ENCODE measurements at regions of chr3 and their contacts with region 1.

Region 1: DNA sequence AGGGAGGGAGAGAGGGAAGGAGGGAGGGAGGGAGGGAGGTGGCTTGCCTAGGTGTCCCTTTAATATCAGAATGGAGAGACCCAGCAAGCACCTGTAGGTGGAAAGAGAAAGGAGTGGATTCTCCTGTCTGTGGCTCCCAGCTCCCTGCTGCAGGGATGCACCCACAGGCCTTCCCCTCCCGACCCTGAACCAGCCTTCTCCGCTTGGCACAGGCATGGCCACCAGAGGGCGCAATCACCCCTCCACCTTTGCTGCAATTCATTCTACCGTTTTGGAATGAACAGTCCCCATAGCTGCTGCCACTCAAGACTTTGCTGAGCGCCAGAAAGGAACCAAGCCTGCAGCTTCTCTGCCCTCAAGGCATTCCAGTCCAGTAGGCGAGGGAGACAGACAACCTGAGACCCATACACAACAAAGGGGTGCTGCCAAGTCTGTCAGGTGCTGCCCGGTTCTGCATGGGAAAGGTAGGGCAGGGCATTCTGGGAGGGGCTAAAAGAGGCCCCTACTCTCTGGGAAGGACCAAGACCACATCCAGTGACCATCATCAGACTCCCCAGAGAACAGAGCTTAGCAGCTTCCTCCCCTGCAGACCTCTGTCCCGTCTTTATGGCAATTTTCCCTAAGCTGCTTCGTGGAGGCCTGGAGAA is 4.9 kb downstream of the TLR9 start:
- DNase-seq: peak; percentile 54
- ATAC-seq: peak; percentile 72
- H3K4me3 ChIP-seq: no peak overlapping the region
- H3K27ac ChIP-seq: no peak overlapping the region
- H3K4me1 ChIP-seq: peaks cover 21 to 42% of the 10 kb centered on the region in 2 experiments
- H3K27me3 ChIP-seq: no peaks in the 10 kb centered on the region
- CTCF ChIP-seq: peak in 2 of 3 experiments; percentile 94 to 95; a peak in 4 of 6 replicates
- POLR2A ChIP-seq: no peak
- RAD21 ChIP-seq: no peak

Region 2: DNA sequence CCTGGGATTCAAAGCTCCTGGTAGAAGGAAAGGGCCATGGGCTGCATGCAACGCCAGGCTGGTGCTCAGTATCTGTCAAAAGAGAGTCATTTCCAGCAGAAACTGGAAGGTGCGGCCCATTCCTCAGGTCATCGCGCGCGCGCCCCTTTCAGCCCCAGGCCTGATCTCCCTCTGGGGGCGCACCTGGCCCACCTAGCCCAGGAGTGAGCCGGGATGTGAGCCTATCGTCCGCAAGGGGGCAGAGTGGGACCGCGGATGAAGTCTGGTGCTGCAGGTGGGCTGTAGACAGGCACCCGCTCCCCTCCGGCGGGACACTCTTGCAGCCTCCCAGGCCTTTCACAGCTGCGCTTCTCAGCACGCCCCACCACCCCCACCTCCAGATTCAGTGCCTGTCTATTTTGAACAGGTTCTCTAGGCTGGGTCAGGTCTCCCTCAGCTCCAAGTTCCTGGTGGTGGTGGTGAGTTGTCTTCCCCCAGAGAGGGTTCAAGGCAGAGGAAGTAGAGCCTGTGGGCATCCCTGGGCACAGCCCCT is 219.0 kb before region 1 on chr3:
- CTCF ChIA-PET with region 1: interaction called, 7 read pairs
- POLR2A ChIA-PET with region 1: no interaction called
- RAD21 ChIA-PET with region 1: no interaction called
- intact Hi-C with region 1: loop called (anchors 2 kb)
- DNase-seq: peak; percentile 59
- ATAC-seq: peak; percentile 96
- H3K4me3 ChIP-seq: no peak overlapping the region
- H3K27ac ChIP-seq: no peak overlapping the region; the same call in 1 of the 2 replicates
- H3K4me1 ChIP-seq: peaks cover 11 to 35% of the 10 kb centered on the region in 2 experiments
- H3K27me3 ChIP-seq: no peaks in the 10 kb centered on the region
- CTCF ChIP-seq: peak in 2 of 3 experiments; percentile 95 to 98; a peak in 4 of 6 replicates
- POLR2A ChIP-seq: no peak
- RAD21 ChIP-seq: no peak

Region 3: DNA sequence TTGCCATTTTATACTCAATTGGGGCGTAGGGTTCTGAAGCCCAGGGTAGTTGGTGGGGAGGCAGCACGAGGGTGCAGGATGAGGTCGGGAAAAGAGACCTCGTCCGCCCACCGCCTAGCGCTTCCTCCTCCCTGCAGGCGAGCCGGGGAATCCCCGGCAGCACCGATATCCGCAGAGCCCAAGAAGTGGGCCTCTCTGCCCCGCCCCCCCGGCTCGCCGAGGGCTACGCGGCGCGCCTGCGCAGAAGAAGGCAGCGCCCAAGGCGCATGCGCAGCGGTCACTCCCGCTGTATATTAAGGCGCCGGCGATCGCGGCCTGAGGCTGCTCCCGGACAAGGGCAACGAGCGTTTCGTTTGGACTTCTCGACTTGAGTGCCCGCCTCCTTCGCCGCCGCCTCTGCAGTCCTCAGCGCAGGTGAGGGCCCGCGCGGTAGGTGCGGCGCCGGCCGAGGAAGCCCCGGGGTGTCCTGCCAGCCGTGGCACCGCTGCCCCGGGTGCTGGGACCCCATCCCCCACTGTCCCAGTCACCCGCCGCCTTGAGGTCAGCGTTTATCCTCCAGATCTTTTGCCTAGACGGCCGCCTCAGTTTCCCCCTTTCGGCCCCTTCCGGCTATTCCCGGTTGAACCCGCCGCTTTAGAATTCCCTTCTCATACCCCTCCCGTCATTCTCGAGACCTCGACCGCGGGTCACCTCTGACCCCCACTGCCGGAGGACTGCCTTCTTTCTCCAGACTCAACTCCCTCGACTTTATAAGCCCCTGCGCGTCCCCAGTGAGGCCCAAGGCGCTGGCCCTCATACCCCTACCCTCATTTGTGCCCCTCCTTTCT is 22.4 kb before region 1 on chr3 and contains the start of gene ALAS1:
- CTCF ChIA-PET with region 1: interaction called, 10 read pairs
- POLR2A ChIA-PET with region 1: interaction called, 4 read pairs
- RAD21 ChIA-PET with region 1: no interaction called
- intact Hi-C with region 1: no loop called
- DNase-seq: peak; percentile 65
- ATAC-seq: peak; percentile 90
- H3K4me3 ChIP-seq: peak within 1 kb of the TSS; percentile 79 to 89
- H3K27ac ChIP-seq: peak within 1 kb of the TSS; percentile 87
- H3K4me1 ChIP-seq: peaks cover 9 to 28% of the 10 kb centered on the region in 2 experiments
- H3K27me3 ChIP-seq: no peaks in the 10 kb centered on the region
- CTCF ChIP-seq: no peak
- POLR2A ChIP-seq: peak; percentile 91
- RAD21 ChIP-seq: no peak
- total RNA-seq, gene ALAS1: 74.0 TPM

Region 4: DNA sequence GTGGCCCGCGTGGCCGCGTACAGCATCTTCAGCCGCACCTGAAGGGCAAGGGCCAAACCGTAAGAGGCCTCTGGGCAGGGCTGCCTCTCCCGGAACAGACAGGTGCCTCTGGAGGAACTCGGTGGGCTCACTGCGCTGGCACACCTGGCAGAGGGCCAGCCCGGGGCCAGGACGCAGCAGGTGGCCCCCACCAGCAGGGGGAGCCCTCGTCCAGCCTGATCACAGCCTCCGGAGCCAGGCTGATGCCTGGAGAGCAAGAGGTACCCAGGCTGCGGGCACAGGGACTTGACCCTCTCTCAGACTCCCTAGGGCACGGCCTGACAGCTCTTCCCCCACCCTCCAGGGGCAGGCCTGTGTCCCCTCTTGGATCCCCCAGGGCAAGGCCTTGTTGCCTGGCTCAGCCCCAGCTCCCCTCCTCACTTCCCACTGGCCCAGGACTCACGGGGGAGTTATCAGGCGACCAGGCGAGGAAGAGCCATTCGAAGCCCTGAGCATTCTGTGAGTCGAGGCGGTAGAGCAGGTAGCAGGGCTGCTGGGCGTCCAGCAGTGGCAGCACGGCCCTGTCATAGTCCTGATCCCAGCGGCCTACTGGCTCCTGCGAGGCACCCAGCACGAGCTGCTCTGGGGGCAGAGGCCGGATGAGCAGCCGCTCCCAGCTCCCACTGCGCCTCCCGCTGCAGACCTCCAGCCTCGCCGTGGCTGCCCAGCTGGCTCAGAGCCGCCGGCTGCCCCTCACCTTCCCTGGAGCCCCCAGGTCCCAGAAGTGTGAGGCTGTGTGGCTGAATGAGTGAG is 11.2 kb after region 1 on chr3:
- CTCF ChIA-PET with region 1: interaction called, 18 read pairs
- POLR2A ChIA-PET with region 1: interaction called, 4 read pairs
- RAD21 ChIA-PET with region 1: interaction called in 1 of 2 experiments, 3 read pairs
- intact Hi-C with region 1: no loop called
- DNase-seq: no peak
- ATAC-seq: peak; percentile 75
- H3K4me3 ChIP-seq: no peak overlapping the region
- H3K27ac ChIP-seq: no peak overlapping the region
- H3K4me1 ChIP-seq: peaks cover 3 to 6% of the 10 kb centered on the region in 2 experiments; a peak in 3 of 4 replicates
- H3K27me3 ChIP-seq: no peaks in the 10 kb centered on the region
- CTCF ChIP-seq: peak in 2 of 3 experiments; percentile 92 to 97; a peak in 4 of 6 replicates
- POLR2A ChIP-seq: no peak
- RAD21 ChIP-seq: no peak

Region 5: DNA sequence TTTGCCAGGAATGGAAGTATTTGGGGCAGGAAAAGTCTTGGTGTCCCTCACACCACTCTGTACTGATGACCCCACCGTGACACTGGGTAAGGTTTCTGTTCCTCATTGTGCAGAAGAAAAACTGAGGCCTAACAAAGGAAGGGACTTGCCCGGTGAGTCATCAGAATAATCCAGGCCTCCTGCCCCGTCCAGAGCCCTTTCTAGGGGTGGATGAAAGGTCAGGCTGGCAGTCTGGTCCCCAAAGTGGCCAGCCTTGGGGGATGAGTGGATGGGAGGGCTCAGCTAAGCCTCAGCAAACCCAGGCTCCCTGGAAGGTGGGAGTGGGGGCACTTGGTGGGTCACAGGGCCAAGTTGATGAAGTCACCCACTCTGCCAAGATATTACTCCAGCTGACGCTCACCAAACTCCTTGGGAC is 93.3 kb after region 1 on chr3:
- CTCF ChIA-PET with region 1: no interaction called
- POLR2A ChIA-PET with region 1: no interaction called
- RAD21 ChIA-PET with region 1: no interaction called
- intact Hi-C with region 1: no loop called
- DNase-seq: no peak
- ATAC-seq: peak; percentile 71
- H3K4me3 ChIP-seq: peak overlapping the region in 1 of 2 experiments; percentile 19; a peak in 2 of 4 replicates
- H3K27ac ChIP-seq: peak overlapping the region; percentile 11; the same call in 1 of the 2 replicates
- H3K4me1 ChIP-seq: peaks cover 15 to 27% of the 10 kb centered on the region in 2 experiments; a peak in 3 of 4 replicates
- H3K27me3 ChIP-seq: no peaks in the 10 kb centered on the region
- CTCF ChIP-seq: no peak
- POLR2A ChIP-seq: no peak
- RAD21 ChIP-seq: no peak

Region 6: DNA sequence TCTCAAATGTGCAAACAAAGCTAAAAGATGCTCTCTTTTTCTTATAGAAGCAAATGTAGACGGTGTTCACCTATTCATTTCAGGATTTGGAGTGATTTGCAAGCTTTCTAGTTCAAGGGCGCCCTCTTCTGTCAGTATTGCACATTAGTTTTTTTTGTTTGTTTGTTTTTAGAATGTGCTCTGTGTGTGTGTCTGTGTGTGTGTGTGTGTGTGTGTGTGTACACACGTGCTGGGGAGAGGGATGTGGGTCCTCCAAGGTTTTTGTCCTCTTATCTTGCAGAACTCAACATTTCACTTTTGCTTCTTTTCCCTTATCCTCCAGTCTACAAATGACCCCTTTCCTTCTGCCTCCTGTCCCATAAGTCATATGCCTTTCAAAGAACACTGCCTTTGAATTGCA is 119.1 kb after region 1 on chr3:
- CTCF ChIA-PET with region 1: interaction called, 55 read pairs
- POLR2A ChIA-PET with region 1: no interaction called
- RAD21 ChIA-PET with region 1: interaction called in 1 of 2 experiments, 5 read pairs
- intact Hi-C with region 1: no loop called
- DNase-seq: peak; percentile 86
- ATAC-seq: peak; percentile 74
- H3K4me3 ChIP-seq: no peak overlapping the region
- H3K27ac ChIP-seq: no peak overlapping the region
- H3K4me1 ChIP-seq: peaks cover 4 to 10% of the 10 kb centered on the region in 2 experiments; a peak in 3 of 4 replicates
- H3K27me3 ChIP-seq: no peaks in the 10 kb centered on the region
- CTCF ChIP-seq: peak; percentile 40 to 94 (median 82); a peak in 5 of 6 replicates
- POLR2A ChIP-seq: no peak
- RAD21 ChIP-seq: peak; percentile 95

Measured in HCT116 (cell line).